ENCODE measurements at regions of chr7 and their contacts with region 1.

Region 1: DNA sequence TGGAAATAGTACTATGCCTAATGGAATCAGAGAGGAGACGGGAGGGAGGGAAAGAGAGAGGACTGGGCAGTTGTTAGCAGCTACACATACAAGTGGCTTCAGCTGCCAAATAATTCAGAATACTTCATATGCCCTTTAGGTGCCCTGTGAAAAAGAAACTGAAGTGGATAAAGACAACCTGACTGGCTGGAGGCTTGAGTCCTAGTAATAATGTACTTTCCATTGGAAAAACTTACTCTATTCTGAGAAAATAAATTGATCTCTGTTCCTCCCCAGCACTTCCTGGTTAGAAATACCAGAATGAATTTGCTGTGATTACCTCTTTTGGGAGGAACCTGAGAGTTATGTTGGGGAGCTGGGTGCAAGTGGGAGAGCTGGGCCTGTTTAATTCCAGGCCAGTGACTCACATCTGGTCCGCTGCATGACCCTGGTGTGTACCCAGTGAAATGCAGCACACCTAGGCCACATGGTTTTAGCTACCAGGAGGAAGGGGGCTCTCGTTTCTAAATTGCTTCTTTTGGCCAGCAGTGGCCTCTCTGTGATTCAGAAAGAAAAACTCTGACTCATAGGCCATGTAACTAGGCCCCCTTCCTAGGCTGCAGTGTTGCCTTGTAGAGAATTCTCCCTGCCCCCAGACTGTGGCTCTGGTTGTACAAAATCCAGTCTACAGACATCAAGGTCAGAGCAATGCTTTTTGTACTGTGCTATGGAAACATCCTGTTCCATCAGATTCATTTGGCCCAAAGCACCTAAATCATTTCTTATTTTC is 6.5 kb downstream of the AGFG2 start:
- DNase-seq: peak; percentile 36
- H3K4me3 Mint-ChIP-seq: peak overlapping the region; percentile 76
- H3K27ac Mint-ChIP-seq: peak overlapping the region; percentile 99
- H3K4me1 Mint-ChIP-seq: peaks cover 85% of the 10 kb centered on the region
- H3K27me3 Mint-ChIP-seq: no peaks in the 10 kb centered on the region

Region 2: DNA sequence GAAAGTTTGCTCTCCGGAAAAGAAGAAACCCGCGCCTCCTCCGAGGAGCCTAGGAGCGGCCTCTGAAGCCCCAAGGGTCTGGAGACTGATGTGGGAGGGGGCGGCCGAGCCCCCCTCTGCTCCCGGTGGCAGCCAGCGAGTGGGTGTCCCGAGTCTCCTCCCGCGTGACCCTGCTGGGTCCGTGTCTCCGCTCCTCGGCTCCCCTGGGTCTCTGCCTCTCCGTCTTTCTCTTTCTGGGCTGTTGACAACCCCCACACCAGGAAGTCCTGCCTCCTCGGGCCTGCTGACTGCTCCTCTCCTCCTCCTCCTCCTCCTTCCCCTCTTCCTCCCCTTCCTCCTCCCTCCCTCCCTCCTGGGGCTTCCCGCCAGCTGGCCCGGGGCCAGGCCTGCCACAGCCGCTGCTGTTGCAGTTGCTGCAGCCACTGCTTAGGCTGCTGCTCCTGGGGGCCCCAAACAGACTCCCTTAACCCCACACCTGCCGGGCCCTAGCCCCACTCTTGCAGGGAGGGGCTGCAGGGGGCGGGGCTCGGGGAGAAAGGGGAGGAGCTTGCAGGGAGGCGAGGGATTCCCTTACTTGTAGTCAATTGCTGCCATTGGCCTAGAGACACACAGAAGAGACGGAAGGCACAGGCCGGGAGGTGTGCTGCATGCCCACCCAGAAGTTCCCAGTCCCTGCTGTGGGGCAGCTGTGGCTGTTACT is 66.4 kb before region 1 on chr7 and contains the start of gene TSC22D4:
- intact Hi-C with region 1: loop called (anchors 2 kb)
- DNase-seq: peak; percentile 86
- H3K4me3 Mint-ChIP-seq: peak within 1 kb of the TSS; percentile 99
- H3K27ac Mint-ChIP-seq: peak within 1 kb of the TSS; percentile 88
- H3K4me1 Mint-ChIP-seq: peaks cover 26% of the 10 kb centered on the region
- H3K27me3 Mint-ChIP-seq: no peaks in the 10 kb centered on the region
- total RNA-seq, gene TSC22D4: 103 and 106 TPM in 2 replicates

Region 3: GRCh38 chr7:100532165-100533022 is 13.2 kb before region 1 on chr7:
- intact Hi-C with region 1: no loop called
- DNase-seq: no peak
- H3K4me3 Mint-ChIP-seq: no peak overlapping the region
- H3K27ac Mint-ChIP-seq: no peak overlapping the region
- H3K4me1 Mint-ChIP-seq: peaks cover 6% of the 10 kb centered on the region
- H3K27me3 Mint-ChIP-seq: no peaks in the 10 kb centered on the region

Region 4: DNA sequence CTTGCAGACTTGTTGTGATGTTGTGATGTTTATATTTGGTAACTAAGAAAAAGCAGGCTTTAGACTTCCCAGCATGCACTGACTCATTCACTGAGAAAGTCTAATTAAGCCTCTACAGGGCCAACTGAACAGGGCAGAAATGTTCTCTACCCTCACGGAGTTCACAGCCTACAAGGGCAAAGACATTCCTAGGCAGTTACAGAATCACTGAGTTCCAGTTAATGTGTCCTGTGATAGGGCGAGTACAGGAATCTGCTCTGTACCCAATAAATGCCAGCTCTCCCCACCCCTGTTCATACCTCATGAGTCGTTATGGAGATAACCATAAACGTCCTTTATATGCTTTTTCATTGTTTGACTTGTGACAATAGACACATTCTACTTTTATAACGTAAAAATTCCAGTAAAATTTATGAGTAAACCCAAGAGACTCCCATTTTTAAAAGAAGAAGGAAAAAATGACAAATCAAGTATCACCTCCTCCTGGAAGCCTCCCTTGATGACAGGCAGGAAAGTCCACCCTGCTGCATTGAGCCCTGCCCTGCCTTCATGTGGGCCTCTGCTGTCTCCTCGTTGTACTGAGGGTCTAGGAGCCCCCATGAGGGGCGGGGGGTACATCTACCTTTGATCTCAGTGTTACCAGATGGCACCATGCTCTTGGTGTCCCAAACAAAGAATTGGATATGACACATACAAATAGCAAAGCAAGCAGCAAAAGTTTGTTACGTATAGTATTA is 438.1 kb after region 1 on chr7:
- intact Hi-C with region 1: no loop called
- DNase-seq: no peak
- H3K4me3 Mint-ChIP-seq: no peak overlapping the region
- H3K27ac Mint-ChIP-seq: no peak overlapping the region
- H3K4me1 Mint-ChIP-seq: no peaks in the 10 kb centered on the region
- H3K27me3 Mint-ChIP-seq: no peaks in the 10 kb centered on the region